Activated T-helper 1 cell treated with anti-CD3 and anti-CD28 coated beads, Interleukin-12 subunit alpha, Interleukin-12 subunit beta, Interleukin-2, Interleukin-4 antibody, amounts not matched to agents 30 ng/mL and 10 ng/mL and 1 ng/mL, durations not matched to agents 14 hours and 24 hours and 36 hours (primary cell): ENCODE measurements at regions of chr11 and their contacts with region 1.

Region 1: GRCh38 chr11:45804761-45805304 is at the start of gene SLC35C1:
- DNase-seq: peak; percentile 96
- H3K4me3 Mint-ChIP-seq: peak within 1 kb of the TSS; percentile 97
- H3K27ac Mint-ChIP-seq: peak within 1 kb of the TSS; percentile 92
- H3K4me1 Mint-ChIP-seq: peaks cover 38% of the 10 kb centered on the region
- H3K27me3 Mint-ChIP-seq: no peaks in the 10 kb centered on the region
- total RNA-seq, gene SLC35C1: 16.3 and 18.2 TPM in 2 replicates

Region 2: GRCh38 chr11:45794169-45794568 is 10.7 kb before region 1 on chr11:
- intact Hi-C with region 1: no loop called
- DNase-seq: no peak
- H3K4me3 Mint-ChIP-seq: no peak overlapping the region
- H3K27ac Mint-ChIP-seq: no peak overlapping the region
- H3K4me1 Mint-ChIP-seq: no peaks in the 10 kb centered on the region
- H3K27me3 Mint-ChIP-seq: peaks cover 14% of the 10 kb centered on the region

Region 3: GRCh38 chr11:45899448-45900173 is 94.8 kb after region 1 on chr11:
- intact Hi-C with region 1: loop called (anchors 1 kb)
- DNase-seq: peak; percentile 66
- H3K4me3 Mint-ChIP-seq: peak overlapping the region; percentile 42
- H3K27ac Mint-ChIP-seq: no peak overlapping the region
- H3K4me1 Mint-ChIP-seq: no peaks in the 10 kb centered on the region
- H3K27me3 Mint-ChIP-seq: peaks cover 30% of the 10 kb centered on the region

Region 4: GRCh38 chr11:46560300-46560991 is 755.6 kb after region 1 on chr11:
- intact Hi-C with region 1: no loop called
- DNase-seq: peak; percentile 16
- H3K4me3 Mint-ChIP-seq: peak overlapping the region; percentile 85
- H3K27ac Mint-ChIP-seq: peak overlapping the region; percentile 76
- H3K4me1 Mint-ChIP-seq: peaks cover 59% of the 10 kb centered on the region
- H3K27me3 Mint-ChIP-seq: no peaks in the 10 kb centered on the region